CD4-positive, alpha-beta T cell (primary cell): ENCODE measurements at regions of chr11 and their contacts with region 1.

Region 1: GRCh38 chr11:111446404-111447111 is 65.6 kb downstream of the BTG4 start:
- DNase-seq: peak; percentile 45 to 95 (median 70)
- ATAC-seq: peak; percentile 98
- H3K4me3 ChIP-seq: no peak overlapping the region
- H3K4me3 Mint-ChIP-seq: peak overlapping the region; percentile 34
- H3K27ac ChIP-seq: peak overlapping the region in 1 of 2 donors; percentile 12
- H3K27ac Mint-ChIP-seq: peak overlapping the region; percentile 58
- H3K4me1 ChIP-seq: peaks cover 15% of the 10 kb centered on the region
- H3K4me1 Mint-ChIP-seq: peaks cover 14% of the 10 kb centered on the region
- H3K27me3 ChIP-seq: no peaks in the 10 kb centered on the region
- H3K27me3 Mint-ChIP-seq: no peaks in the 10 kb centered on the region
- CTCF ChIP-seq: peak; percentile 64

Region 2: DNA sequence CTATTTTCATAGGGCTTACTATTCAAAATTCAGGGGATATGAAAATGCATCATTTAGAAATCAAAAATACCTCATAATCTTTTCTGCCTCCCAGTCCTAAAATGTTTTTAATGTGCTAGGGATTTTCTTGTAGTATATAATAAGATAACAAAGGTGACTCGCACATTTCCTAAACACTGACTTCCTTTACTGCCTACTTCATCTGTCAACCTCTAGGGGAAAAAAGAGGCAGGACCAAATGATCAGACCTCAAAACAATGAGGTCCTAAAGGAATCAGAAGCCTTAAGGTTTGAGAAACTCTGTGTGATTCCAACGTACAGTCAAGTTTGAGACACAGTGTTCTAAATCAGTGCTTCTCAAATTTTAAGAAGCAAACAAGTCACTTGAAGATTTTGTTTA is 257.1 kb before region 1 on chr11:
- CTCF ChIA-PET with region 1: no interaction called
- POLR2A ChIA-PET with region 1: no interaction called
- intact Hi-C with region 1: no loop called
- DNase-seq: no peak
- ATAC-seq: no peak
- H3K4me3 ChIP-seq: no peak overlapping the region
- H3K4me3 Mint-ChIP-seq: no peak overlapping the region
- H3K27ac ChIP-seq: no peak overlapping the region
- H3K27ac Mint-ChIP-seq: no peak overlapping the region
- H3K4me1 ChIP-seq: no peaks in the 10 kb centered on the region
- H3K4me1 Mint-ChIP-seq: no peaks in the 10 kb centered on the region
- H3K27me3 ChIP-seq: no peaks in the 10 kb centered on the region
- H3K27me3 Mint-ChIP-seq: peaks cover 10% of the 10 kb centered on the region
- CTCF ChIP-seq: no peak

Region 3: DNA sequence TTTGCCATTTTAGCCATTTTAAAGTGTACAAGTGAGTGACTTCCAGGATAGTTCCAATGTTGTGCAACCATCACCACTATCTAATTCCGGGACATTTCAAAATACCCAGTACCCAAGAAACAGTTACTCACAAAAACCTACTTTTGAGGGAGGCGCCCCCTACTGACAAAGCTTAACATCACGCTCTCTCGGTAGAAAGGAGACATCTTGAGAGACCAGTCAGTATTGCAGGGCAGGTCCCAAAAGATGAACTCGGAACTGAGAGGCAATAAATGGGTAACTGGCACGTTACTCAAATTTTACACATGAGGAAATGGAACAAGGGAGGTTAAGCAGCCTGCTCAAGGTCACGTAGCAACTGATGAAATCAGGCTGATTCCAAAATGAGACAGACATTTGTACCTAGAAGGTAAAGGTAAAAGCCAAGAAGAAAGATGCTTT is 17.5 kb before region 1 on chr11:
- CTCF ChIA-PET with region 1: interaction called, 10 read pairs
- POLR2A ChIA-PET with region 1: interaction called, 3 read pairs
- intact Hi-C with region 1: no loop called
- DNase-seq: peak; percentile 17 to 68 (median 40)
- ATAC-seq: peak; percentile 56
- H3K4me3 ChIP-seq: no peak overlapping the region
- H3K4me3 Mint-ChIP-seq: no peak overlapping the region
- H3K27ac ChIP-seq: no peak overlapping the region
- H3K27ac Mint-ChIP-seq: no peak overlapping the region
- H3K4me1 ChIP-seq: no peaks in the 10 kb centered on the region
- H3K4me1 Mint-ChIP-seq: no peaks in the 10 kb centered on the region
- H3K27me3 ChIP-seq: no peaks in the 10 kb centered on the region
- H3K27me3 Mint-ChIP-seq: no peaks in the 10 kb centered on the region
- CTCF ChIP-seq: peak; percentile 69

Region 4: GRCh38 chr11:111435046-111435698 is 11.4 kb before region 1 on chr11:
- CTCF ChIA-PET with region 1: interaction called, 17 read pairs
- POLR2A ChIA-PET with region 1: interaction called, 3 read pairs
- intact Hi-C with region 1: no loop called
- DNase-seq: no peak
- ATAC-seq: no peak
- H3K4me3 ChIP-seq: no peak overlapping the region
- H3K4me3 Mint-ChIP-seq: no peak overlapping the region
- H3K27ac ChIP-seq: no peak overlapping the region
- H3K27ac Mint-ChIP-seq: no peak overlapping the region
- H3K4me1 ChIP-seq: peaks cover 11% of the 10 kb centered on the region
- H3K4me1 Mint-ChIP-seq: peaks cover 15% of the 10 kb centered on the region
- H3K27me3 ChIP-seq: no peaks in the 10 kb centered on the region
- H3K27me3 Mint-ChIP-seq: no peaks in the 10 kb centered on the region
- CTCF ChIP-seq: no peak